ENCODE measurements at regions of chr17 and their contacts with region 1.

Region 1: DNA sequence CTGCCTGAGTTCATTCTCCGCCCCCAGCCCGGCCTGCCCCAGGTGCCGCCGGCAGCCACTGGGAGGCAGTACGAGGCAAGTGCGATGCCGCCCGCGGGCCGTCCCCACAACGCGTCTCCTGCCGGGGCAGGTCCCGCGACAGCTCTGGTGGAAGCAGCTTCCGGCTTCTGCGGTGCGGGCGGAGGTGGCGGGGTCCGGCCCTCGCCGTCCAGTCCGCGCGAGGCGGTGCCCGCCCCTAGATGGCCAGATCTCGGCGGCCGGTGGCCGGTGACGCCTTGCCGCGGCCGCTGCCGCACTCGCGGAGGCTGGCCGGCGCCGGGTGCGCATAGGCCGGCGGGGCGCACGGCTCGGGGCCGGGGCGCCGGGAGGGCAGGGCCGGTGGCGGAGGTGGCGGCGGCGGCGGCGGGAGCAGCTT is 1.8 kb downstream of the GJD3 start:
- DNase-seq: peak; percentile 54 to 69
- ATAC-seq: peak; percentile 22 to 46 (median 34)
- H3K4me3 ChIP-seq: peak overlapping the region in 9 of 10 donors; percentile 40 to 67 (median 54)
- H3K27ac ChIP-seq: peak overlapping the region in 5 of 10 donors; percentile 28 to 81 (median 70)
- H3K4me1 ChIP-seq: peaks cover 0 to 37% (median 10%) of the 10 kb centered on the region in 9 donors
- H3K27me3 ChIP-seq: peaks cover 0 to 26% (median 0%) of the 10 kb centered on the region in 7 donors
- CTCF ChIP-seq: peak in 7 of 9 donors; percentile 45 to 70 (median 64)

Region 2: DNA sequence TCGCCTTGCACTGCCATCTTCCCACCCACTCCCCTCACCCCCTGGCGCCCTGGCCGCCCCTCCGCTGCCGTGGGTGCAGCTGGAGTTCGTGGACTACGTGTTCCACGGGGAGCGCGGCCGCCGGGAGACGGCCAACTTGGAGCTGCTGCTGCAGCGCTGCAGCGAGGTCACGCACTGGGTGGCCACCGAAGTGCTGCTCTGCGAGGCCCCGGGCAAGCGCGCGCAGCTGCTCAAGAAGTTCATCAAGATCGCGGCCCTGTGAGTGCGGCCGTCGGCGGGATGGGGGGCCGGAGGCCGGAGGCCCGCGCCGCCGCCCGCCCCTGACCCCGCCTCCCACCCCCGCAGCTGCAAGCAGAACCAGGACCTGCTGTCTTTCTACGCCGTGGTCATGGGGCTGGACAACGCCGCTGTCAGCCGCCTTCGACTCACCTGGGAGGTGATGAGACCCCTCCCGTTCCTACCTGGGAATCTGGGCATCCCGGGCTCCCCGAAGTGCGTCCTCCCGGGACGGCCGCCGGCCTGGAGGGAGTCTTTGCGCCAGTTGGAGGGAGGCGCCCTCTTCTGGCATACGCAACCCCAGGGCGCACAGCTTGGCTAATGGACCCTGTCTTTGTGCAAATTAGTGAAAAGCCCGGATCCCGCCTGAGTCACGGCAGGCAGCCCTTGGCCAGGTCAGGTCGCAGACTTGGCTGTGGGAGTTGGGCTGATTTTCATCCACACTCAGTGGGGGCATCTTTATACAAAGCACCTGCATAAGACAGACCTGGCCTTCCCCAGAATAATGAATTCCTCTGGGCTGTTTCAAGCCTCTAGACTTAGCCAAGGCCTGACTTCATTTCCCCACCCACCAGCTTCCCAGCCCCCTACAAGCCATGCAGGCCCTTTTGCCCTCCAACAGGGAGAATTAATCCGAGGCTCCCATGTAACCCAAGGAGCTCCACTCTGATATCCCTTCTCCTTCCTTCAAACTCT is 171.2 kb before region 1 on chr17:
- intact Hi-C with region 1: loop called in 1 of 10 experiments (anchors 10 kb)
- DNase-seq: peak; percentile 65 to 76
- ATAC-seq: peak; percentile 77 to 91 (median 82)
- H3K4me3 ChIP-seq: peak overlapping the region; percentile 27 to 70 (median 62)
- H3K27ac ChIP-seq: peak overlapping the region in 7 of 10 donors; percentile 18 to 54 (median 40)
- H3K4me1 ChIP-seq: peaks cover 0 to 25% (median 7%) of the 10 kb centered on the region in 9 donors
- H3K27me3 ChIP-seq: peaks cover 0 to 7% (median 0%) of the 10 kb centered on the region in 7 donors
- CTCF ChIP-seq: peak; percentile 39 to 84 (median 70)

Region 3: DNA sequence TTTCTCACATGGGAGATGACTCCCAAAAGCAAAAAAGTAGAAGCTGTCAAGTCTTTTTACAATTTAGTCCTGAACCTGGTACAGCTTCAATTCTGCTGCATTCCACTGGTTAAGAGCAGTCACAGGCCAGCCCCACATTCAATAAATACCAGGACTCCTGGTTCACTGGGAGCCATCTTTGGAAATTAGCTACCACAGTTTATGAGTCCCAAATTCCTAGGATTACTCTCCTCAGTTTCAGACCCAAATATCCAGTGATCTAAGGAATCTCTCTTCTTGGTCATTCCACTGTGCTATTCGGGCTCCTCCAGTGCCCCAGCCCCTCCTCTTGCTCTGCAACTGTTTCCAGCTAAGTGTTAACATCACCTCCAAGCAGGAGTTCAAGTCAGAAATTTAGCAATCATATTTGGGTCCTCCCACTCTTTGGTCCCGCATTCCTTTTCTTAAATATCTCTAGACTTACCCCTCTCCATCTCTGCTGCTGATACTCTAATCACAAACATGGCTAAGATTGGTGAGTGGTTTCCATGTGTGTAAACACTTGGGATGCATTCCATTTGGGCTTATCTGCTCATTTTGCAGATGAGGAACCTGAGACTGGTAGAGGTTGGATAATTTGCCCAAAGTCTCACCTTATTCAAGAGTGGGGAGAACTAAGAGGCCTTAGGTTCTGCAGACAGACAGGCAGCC is 153.2 kb before region 1 on chr17:
- intact Hi-C with region 1: loop called in 6 of 10 experiments (anchors 5 to 10 kb)
- DNase-seq: no peak
- ATAC-seq: no peak
- H3K4me3 ChIP-seq: no peak overlapping the region
- H3K27ac ChIP-seq: no peak overlapping the region
- H3K4me1 ChIP-seq: no peaks in the 10 kb centered on the region
- H3K27me3 ChIP-seq: no peaks in the 10 kb centered on the region
- CTCF ChIP-seq: no peak

Region 4: GRCh38 chr17:40399185-40399584 is 36.5 kb after region 1 on chr17:
- intact Hi-C with region 1: loop called in 4 of 10 experiments (anchors 5 kb)
- DNase-seq: no peak
- ATAC-seq: peak in 4 of 8 donors; percentile 13 to 57 (median 38)
- H3K4me3 ChIP-seq: no peak overlapping the region
- H3K27ac ChIP-seq: no peak overlapping the region
- H3K4me1 ChIP-seq: no peaks in the 10 kb centered on the region
- H3K27me3 ChIP-seq: no peaks in the 10 kb centered on the region
- CTCF ChIP-seq: peak; percentile 30 to 78 (median 68)

Region 5: GRCh38 chr17:40443583-40444327 is 81.1 kb after region 1 on chr17:
- intact Hi-C with region 1: loop called in 1 of 10 experiments (anchors 10 kb)
- DNase-seq: peak; percentile 77 to 86
- ATAC-seq: peak; percentile 22 to 61 (median 42)
- H3K4me3 ChIP-seq: peak overlapping the region; percentile 66 to 89 (median 82)
- H3K27ac ChIP-seq: peak overlapping the region; percentile 89 to 99 (median 96)
- H3K4me1 ChIP-seq: peaks cover 16 to 61% (median 50%) of the 10 kb centered on the region in 9 donors
- H3K27me3 ChIP-seq: peaks cover 0 to 15% (median 0%) of the 10 kb centered on the region in 7 donors
- CTCF ChIP-seq: peak; percentile 16 to 57 (median 45)

Region 6: GRCh38 chr17:40531051-40531991 is 168.6 kb after region 1 on chr17:
- intact Hi-C with region 1: loop called in 9 of 10 experiments (anchors 1 to 10 kb)
- DNase-seq: no peak
- ATAC-seq: no peak
- H3K4me3 ChIP-seq: no peak overlapping the region
- H3K27ac ChIP-seq: peak overlapping the region in 6 of 10 donors; percentile 71 to 85 (median 74)
- H3K4me1 ChIP-seq: peaks cover 10 to 52% (median 35%) of the 10 kb centered on the region in 9 donors
- H3K27me3 ChIP-seq: peaks cover 0 to 4% (median 0%) of the 10 kb centered on the region in 7 donors
- CTCF ChIP-seq: no peak

Region 7: DNA sequence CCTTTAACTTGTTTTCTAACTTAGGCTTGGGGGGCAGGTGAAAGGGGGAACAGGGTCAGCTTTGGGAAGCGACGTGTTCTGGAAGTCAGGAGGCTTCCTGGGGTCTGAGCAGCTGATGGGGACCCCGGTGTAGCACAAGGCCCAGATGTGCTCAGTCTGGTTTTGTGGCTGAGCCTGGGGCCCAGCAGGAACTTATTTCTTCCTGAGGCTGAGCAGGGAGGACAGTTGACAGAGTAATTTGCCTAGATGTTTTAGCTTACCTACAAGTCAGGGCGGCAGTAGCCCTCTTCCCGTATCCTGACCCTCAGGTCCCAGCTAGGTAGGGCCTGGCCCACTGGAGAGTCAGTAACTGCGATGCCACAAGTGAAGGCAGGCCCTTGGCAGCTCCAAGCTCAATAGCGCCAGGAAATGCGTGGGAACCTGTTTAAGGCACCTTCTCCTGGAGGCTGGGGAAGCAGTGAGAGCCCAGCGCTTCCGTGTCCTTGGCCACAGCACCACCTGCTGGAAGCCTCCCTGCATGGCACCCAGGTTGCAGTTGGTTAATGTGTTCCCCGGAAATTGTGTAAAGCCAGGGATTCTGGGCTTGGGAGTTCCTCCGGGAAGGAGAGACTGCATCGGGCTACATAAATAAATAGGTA is 197.4 kb after region 1 on chr17:
- intact Hi-C with region 1: loop called in 7 of 10 experiments (anchors 1 to 10 kb)
- DNase-seq: peak; percentile 89 to 92
- ATAC-seq: peak; percentile 76 to 89 (median 83)
- H3K4me3 ChIP-seq: peak overlapping the region in 5 of 10 donors; percentile 6 to 40 (median 20)
- H3K27ac ChIP-seq: peak overlapping the region in 9 of 10 donors; percentile 61 to 94 (median 82)
- H3K4me1 ChIP-seq: peaks cover 28 to 72% (median 53%) of the 10 kb centered on the region in 9 donors
- H3K27me3 ChIP-seq: peaks cover 0 to 21% (median 0%) of the 10 kb centered on the region in 7 donors
- CTCF ChIP-seq: peak; percentile 95 to 99 (median 98)

Region 8: DNA sequence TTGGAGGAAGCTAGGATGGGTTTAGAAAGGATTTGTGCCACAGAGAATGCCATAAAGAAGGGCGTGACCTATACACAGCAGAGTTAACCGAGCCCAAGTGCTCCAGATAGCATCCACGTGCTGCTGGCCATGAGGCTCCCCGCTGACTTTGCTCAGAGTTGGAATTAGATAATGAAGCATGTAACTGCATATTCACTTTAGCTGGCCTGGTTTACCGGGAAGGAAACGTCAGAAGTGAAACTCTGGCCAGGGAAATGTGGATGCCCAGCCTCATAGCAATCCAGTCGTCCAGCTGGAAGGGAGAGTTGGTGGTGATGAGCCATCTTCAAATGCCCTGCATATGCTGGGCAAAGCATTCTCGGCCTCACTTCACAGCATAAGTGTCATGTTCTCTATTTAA is 1112.2 kb after region 1 on chr17:
- intact Hi-C with region 1: no loop called
- DNase-seq: peak in 1 of 2 donors; percentile 57
- ATAC-seq: peak; percentile 66 to 96 (median 86)
- H3K4me3 ChIP-seq: no peak overlapping the region
- H3K27ac ChIP-seq: peak overlapping the region in 2 of 10 donors; percentile 12 to 34
- H3K4me1 ChIP-seq: peaks cover 0 to 4% (median 0%) of the 10 kb centered on the region in 9 donors
- H3K27me3 ChIP-seq: no peaks in the 10 kb centered on the region
- CTCF ChIP-seq: no peak

Measured in heart right ventricle (tissue), 16 donors.